ENCODE measurements at regions of chr6 and their contacts with region 1.

Region 1: GRCh38 chr6:1911474-1911873 is 301.8 kb downstream of the FOXC1 start:
- DNase-seq: no peak
- H3K4me3 ChIP-seq: no peak overlapping the region
- H3K27ac ChIP-seq: no peak overlapping the region
- H3K4me1 ChIP-seq: peaks cover 12% of the 10 kb centered on the region
- H3K27me3 ChIP-seq: no peaks in the 10 kb centered on the region
- CTCF ChIP-seq: no peak

Region 2: GRCh38 chr6:1767481-1768251 is 143.8 kb before region 1 on chr6:
- CTCF ChIA-PET with region 1: no interaction called
- dilution Hi-C with region 1: no loop called
- in situ Hi-C with region 1: no loop called
- intact Hi-C with region 1: no loop called
- DNase-seq: peak; percentile 50
- H3K4me3 ChIP-seq: no peak overlapping the region
- H3K27ac ChIP-seq: peak overlapping the region; percentile 44
- H3K4me1 ChIP-seq: peaks cover 43% of the 10 kb centered on the region
- H3K27me3 ChIP-seq: no peaks in the 10 kb centered on the region
- CTCF ChIP-seq: no peak

Region 3: DNA sequence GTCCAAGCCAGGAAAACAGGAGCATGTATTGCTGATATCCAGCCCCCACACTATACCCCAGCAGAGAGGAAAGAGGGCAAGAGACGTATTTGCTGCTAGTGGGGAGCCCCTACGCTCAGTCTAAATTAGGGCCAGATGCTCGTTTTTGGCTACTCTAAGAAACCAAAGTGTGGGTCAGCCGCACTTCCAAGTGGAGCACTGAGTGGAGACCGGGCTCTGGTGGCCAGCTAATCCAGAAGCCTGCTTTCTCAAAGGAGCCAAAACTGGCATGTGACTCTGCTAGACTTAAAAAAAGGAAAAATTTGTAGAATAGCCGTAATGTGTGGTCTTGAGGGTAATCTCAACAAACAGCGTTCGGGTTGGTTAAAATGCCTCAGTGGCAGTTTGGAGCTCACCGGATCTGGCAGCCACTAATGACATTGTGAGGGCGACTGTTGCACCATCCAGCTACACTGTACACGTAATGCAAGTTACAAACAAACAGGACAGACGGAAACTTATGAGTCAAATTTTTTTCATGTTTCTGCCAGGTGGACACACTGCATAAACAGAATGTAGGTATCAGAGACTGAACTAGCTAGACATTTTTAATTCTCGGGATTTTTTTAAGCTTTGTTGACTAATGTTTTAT is 70.9 kb before region 1 on chr6:
- CTCF ChIA-PET with region 1: no interaction called
- dilution Hi-C with region 1: no loop called
- in situ Hi-C with region 1: no loop called
- intact Hi-C with region 1: no loop called
- DNase-seq: no peak
- H3K4me3 ChIP-seq: no peak overlapping the region
- H3K27ac ChIP-seq: no peak overlapping the region
- H3K4me1 ChIP-seq: peaks cover 15% of the 10 kb centered on the region
- H3K27me3 ChIP-seq: no peaks in the 10 kb centered on the region
- CTCF ChIP-seq: no peak

Region 4: DNA sequence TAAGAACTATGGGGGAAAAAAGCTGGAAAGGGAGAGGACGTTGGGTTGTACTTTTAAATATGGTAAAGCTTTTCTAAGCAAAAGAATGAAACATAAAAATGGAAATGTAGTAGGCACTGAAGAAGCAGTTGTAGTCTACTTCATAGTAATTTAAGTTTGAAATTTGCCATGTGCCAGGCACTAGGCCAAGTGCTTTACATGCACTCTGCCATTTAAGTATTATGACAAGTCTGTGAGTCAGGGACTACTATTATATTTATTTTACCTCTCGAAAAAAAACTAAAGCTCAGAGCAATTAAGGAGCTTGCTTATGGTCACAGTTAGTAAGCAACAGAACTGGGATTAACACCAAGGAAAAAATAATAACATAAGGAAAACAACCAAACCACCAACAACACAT is 76.2 kb after region 1 on chr6:
- CTCF ChIA-PET with region 1: no interaction called
- dilution Hi-C with region 1: loop called (anchors 5 kb)
- in situ Hi-C with region 1: no loop called
- intact Hi-C with region 1: no loop called
- DNase-seq: peak; percentile 73
- H3K4me3 ChIP-seq: no peak overlapping the region
- H3K27ac ChIP-seq: no peak overlapping the region
- H3K4me1 ChIP-seq: peaks cover 14% of the 10 kb centered on the region
- H3K27me3 ChIP-seq: no peaks in the 10 kb centered on the region
- CTCF ChIP-seq: no peak